IMR-90 (cell line): ENCODE measurements at regions of chr2 and their contacts with region 1.

Region 1: DNA sequence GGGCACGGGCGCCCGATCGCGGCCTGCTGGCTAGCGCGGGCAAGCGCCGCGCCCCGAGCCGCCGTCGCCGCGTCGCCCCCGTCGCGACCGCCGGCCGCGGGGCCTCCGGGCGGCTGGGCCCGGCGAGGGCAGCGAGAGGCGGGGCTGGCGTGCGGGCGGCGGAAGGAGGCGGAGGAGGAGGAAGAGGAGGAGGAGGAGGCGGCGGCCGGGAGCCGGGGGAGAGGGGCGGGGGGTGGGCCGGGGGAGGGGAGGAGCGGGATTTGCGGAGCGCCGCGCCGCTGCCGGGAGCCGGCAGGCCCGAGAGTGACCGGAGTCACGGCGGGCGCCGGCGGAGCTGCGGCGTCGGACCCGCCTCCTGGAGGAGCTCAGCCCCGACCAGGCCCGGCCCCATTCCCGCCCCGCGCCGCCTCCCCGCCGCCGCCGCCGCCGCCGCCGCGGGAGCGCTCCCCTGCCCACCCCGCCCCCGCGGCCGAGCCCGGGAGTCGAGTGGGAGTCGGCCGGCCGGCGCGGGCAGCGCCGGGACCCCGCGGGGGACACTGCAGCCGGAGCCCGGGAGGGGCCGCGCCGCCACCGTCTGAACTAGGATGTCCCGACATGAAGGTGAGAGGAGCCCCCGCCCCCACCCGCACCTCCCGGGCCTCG is at the start of gene KCMF1:
- DNase-seq: peak; percentile 74
- ATAC-seq: peak; percentile 84
- H3K4me3 ChIP-seq: peak within 1 kb of the TSS; percentile 100
- H3K27ac ChIP-seq: peak within 1 kb of the TSS; percentile 97
- H3K4me1 ChIP-seq: peaks cover 5% of the 10 kb centered on the region
- H3K27me3 ChIP-seq: no peaks in the 10 kb centered on the region
- CTCF ChIP-seq: no peak
- POLR2A ChIP-seq: peak; percentile 51; the same call in 1 of the 2 replicates
- RAD21 ChIP-seq: no peak
- total RNA-seq, gene KCMF1: 108 and 118 TPM in 2 replicates

Region 2: GRCh38 chr2:84986018-84986417 is 15.0 kb after region 1 on chr2:
- CTCF ChIA-PET with region 1: interaction called, 6 read pairs
- POLR2A ChIA-PET with region 1: no interaction called
- dilution Hi-C with region 1: no loop called
- in situ Hi-C with region 1: no loop called
- intact Hi-C with region 1: loop called (anchors 2 kb)
- DNase-seq: no peak
- ATAC-seq: peak; percentile 65
- H3K4me3 ChIP-seq: no peak overlapping the region
- H3K27ac ChIP-seq: no peak overlapping the region
- H3K4me1 ChIP-seq: peaks cover 23% of the 10 kb centered on the region
- H3K27me3 ChIP-seq: no peaks in the 10 kb centered on the region
- CTCF ChIP-seq: no peak
- POLR2A ChIP-seq: no peak
- RAD21 ChIP-seq: no peak

Region 3: DNA sequence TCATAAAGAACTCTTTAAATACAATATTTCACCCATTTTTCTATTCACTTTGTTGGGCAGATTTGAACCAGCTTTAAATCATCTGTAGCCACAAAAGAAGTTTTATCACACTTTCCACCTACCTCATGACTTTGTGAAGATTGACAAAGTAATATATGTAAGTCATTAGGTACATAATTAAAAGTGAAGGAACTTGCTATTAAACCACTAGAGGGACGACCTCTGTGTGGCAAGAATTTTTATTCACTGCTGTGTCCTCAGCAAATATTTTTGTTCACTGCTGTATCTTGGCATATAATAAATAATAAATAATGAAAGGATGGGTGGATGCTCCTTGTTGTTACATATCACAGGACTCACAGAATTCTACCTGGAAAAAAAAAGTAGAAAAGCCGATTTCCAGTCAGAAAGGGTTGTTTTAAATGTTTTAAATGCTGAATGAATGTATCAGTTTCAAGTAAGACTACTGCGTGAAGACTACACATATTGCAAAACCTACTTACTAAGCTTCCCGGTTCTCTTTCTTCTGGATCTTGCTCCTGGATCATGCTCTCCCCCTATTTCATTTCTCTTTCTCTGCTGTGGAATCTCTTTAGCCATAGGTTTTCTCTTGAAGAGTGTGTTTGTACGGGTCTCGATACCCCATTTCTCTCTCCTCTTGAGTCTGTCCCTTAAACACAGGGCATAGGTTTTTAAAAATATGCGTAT is 44.8 kb after region 1 on chr2:
- CTCF ChIA-PET with region 1: interaction called, 5 read pairs
- POLR2A ChIA-PET with region 1: no interaction called
- dilution Hi-C with region 1: no loop called
- in situ Hi-C with region 1: no loop called
- intact Hi-C with region 1: loop called (anchors 2 kb)
- DNase-seq: no peak
- ATAC-seq: 0 out of 2 replicates have a peak, but pooled peaks have one; percentile 18
- H3K4me3 ChIP-seq: no peak overlapping the region
- H3K27ac ChIP-seq: 0 out of 2 replicates have a peak overlapping the region, but pooled peaks have one; percentile 5
- H3K4me1 ChIP-seq: peaks cover 24% of the 10 kb centered on the region
- H3K27me3 ChIP-seq: no peaks in the 10 kb centered on the region
- CTCF ChIP-seq: peak; percentile 23; the same call in 1 of the 2 replicates
- POLR2A ChIP-seq: no peak
- RAD21 ChIP-seq: no peak

Region 4: DNA sequence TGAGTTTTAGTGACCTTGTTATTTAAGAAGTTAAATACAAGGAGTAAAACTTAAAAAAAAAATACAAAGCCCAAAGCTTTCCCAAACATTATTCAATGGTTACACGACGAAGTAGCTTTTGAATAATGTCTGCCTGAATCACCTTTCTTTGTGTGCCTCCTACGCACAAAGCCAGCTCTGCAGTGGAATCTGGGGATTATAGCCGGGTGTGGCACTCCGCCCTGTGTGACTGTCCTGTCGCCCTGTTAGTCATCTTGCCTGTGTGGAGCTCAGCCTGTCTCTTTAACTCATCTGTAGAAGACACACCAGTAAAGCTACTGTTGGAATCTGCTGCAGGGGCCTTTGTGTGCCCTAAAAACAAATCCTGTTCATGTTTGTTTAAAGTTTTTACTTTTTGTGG is 82.8 kb after region 1 on chr2:
- CTCF ChIA-PET with region 1: no interaction called
- POLR2A ChIA-PET with region 1: no interaction called
- dilution Hi-C with region 1: no loop called
- in situ Hi-C with region 1: no loop called
- intact Hi-C with region 1: no loop called
- DNase-seq: peak; percentile 54
- ATAC-seq: peak; percentile 48
- H3K4me3 ChIP-seq: no peak overlapping the region
- H3K27ac ChIP-seq: no peak overlapping the region
- H3K4me1 ChIP-seq: peaks cover 6% of the 10 kb centered on the region
- H3K27me3 ChIP-seq: no peaks in the 10 kb centered on the region
- CTCF ChIP-seq: no peak
- POLR2A ChIP-seq: no peak
- RAD21 ChIP-seq: no peak